Naive thymus-derived CD4-positive, alpha-beta T cell (primary cell): ENCODE measurements at regions of chr17 and their contacts with region 1.

Region 1: GRCh38 chr17:17752089-17752820 is 71.0 kb downstream of the RAI1 start:
- DNase-seq: peak; percentile 93 to 98 (median 97)
- ATAC-seq: peak; percentile 96
- H3K4me3 ChIP-seq: peak overlapping the region; percentile 62
- H3K4me3 Mint-ChIP-seq: peak overlapping the region; percentile 78 to 99 (median 92)
- H3K27ac ChIP-seq: peak overlapping the region; percentile 89
- H3K27ac Mint-ChIP-seq: peak overlapping the region; percentile 96 to 100 (median 98)
- H3K4me1 ChIP-seq: peaks cover 39 to 67% of the 10 kb centered on the region in 2 donors
- H3K4me1 Mint-ChIP-seq: peaks cover 50 to 93% (median 77%) of the 10 kb centered on the region in 7 donors
- H3K27me3 ChIP-seq: no peaks in the 10 kb centered on the region
- H3K27me3 Mint-ChIP-seq: no peaks in the 10 kb centered on the region

Region 2: GRCh38 chr17:17681187-17681848 is 70.9 kb before region 1 on chr17 and contains the start of gene RAI1:
- CTCF ChIA-PET with region 1: interaction called, 3 read pairs
- POLR2A ChIA-PET with region 1: interaction called, 4 read pairs
- intact Hi-C with region 1: loop called (anchors 1 to 2 kb)
- DNase-seq: peak; percentile 64 to 87 (median 79)
- ATAC-seq: peak; percentile 82
- H3K4me3 ChIP-seq: peak within 1 kb of the TSS; percentile 62
- H3K4me3 Mint-ChIP-seq: peak within 1 kb of the TSS; percentile 84 to 92 (median 89)
- H3K27ac ChIP-seq: peak within 1 kb of the TSS; percentile 93
- H3K27ac Mint-ChIP-seq: peak within 1 kb of the TSS in 7 of 9 donors; percentile 59 to 90 (median 77)
- H3K4me1 ChIP-seq: peaks cover 7 to 17% of the 10 kb centered on the region in 2 donors
- H3K4me1 Mint-ChIP-seq: peaks cover 14 to 42% (median 37%) of the 10 kb centered on the region in 7 donors
- H3K27me3 ChIP-seq: no peaks in the 10 kb centered on the region
- H3K27me3 Mint-ChIP-seq: peaks cover 0 to 16% (median 0%) of the 10 kb centered on the region in 5 donors
- total RNA-seq, gene RAI1: 20.1 to 46.2 (median 23.6) TPM

Region 3: GRCh38 chr17:17706140-17707060 is 45.9 kb before region 1 on chr17:
- CTCF ChIA-PET with region 1: no interaction called
- POLR2A ChIA-PET with region 1: no interaction called
- intact Hi-C with region 1: no loop called
- DNase-seq: no peak
- ATAC-seq: no peak
- H3K4me3 ChIP-seq: no peak overlapping the region
- H3K4me3 Mint-ChIP-seq: no peak overlapping the region
- H3K27ac ChIP-seq: no peak overlapping the region
- H3K27ac Mint-ChIP-seq: peak overlapping the region in 1 of 9 donors; percentile 33
- H3K4me1 ChIP-seq: no peaks in the 10 kb centered on the region
- H3K4me1 Mint-ChIP-seq: peaks cover 0 to 17% (median 4%) of the 10 kb centered on the region in 7 donors
- H3K27me3 ChIP-seq: no peaks in the 10 kb centered on the region
- H3K27me3 Mint-ChIP-seq: no peaks in the 10 kb centered on the region

Region 4: GRCh38 chr17:17739388-17740066 is 12.7 kb before region 1 on chr17:
- CTCF ChIA-PET with region 1: no interaction called
- POLR2A ChIA-PET with region 1: interaction called, 9 read pairs
- intact Hi-C with region 1: loop called in 1 of 2 experiments (anchors 1 kb)
- DNase-seq: no peak
- ATAC-seq: no peak
- H3K4me3 ChIP-seq: no peak overlapping the region
- H3K4me3 Mint-ChIP-seq: peak overlapping the region in 5 of 10 donors; percentile 2 to 55 (median 45)
- H3K27ac ChIP-seq: peak overlapping the region; percentile 43
- H3K27ac Mint-ChIP-seq: peak overlapping the region in 8 of 9 donors; percentile 26 to 86 (median 70)
- H3K4me1 ChIP-seq: peaks cover 0 to 12% of the 10 kb centered on the region in 2 donors
- H3K4me1 Mint-ChIP-seq: peaks cover 20 to 46% (median 36%) of the 10 kb centered on the region in 7 donors
- H3K27me3 ChIP-seq: no peaks in the 10 kb centered on the region
- H3K27me3 Mint-ChIP-seq: peaks cover 0 to 5% (median 0%) of the 10 kb centered on the region in 5 donors

Region 5: DNA sequence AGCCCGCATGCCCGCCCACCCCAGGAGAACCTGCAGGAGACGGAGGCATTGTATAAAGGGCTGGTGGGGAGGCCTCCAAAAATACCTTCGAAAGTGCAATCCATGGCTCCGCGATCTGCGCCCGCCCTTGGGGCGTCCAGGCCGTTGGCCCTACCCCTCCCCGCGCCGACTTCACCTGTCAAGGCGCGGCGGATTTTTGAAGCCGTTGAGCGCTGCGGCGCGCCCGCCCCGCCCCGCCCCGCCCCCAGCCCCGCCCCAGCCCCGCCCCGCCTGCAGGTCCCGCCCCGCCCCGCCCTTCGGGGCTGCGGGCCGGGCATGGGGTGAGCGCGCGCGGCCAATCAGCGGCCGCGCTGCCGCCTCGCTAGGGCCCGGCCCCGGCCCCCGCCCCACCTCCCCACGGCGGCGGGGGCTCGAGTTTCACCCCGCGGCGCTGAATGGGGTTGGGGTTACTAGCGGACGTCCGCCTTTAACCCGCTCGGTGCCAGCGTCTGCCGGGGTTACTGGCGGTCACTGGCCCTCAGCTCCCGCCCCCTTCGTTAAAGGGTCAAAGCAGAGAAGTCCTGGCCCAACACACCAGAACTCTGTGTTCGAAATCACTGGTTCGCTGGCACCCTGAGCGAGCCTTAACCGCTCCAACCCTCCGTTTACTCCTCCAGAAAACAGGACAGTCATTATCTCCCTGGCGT is 71.3 kb after region 1 on chr17:
- CTCF ChIA-PET with region 1: interaction called, 3 read pairs
- POLR2A ChIA-PET with region 1: no interaction called
- intact Hi-C with region 1: loop called (anchors 1 kb)
- DNase-seq: peak; percentile 71 to 84 (median 81)
- ATAC-seq: peak; percentile 93
- H3K4me3 ChIP-seq: peak overlapping the region; percentile 68
- H3K4me3 Mint-ChIP-seq: peak overlapping the region; percentile 78 to 86 (median 84)
- H3K27ac ChIP-seq: peak overlapping the region; percentile 74
- H3K27ac Mint-ChIP-seq: peak overlapping the region; percentile 78 to 96 (median 93)
- H3K4me1 ChIP-seq: peaks cover 41 to 81% of the 10 kb centered on the region in 2 donors
- H3K4me1 Mint-ChIP-seq: peaks cover 72 to 95% (median 87%) of the 10 kb centered on the region in 7 donors
- H3K27me3 ChIP-seq: no peaks in the 10 kb centered on the region
- H3K27me3 Mint-ChIP-seq: no peaks in the 10 kb centered on the region

Region 6: DNA sequence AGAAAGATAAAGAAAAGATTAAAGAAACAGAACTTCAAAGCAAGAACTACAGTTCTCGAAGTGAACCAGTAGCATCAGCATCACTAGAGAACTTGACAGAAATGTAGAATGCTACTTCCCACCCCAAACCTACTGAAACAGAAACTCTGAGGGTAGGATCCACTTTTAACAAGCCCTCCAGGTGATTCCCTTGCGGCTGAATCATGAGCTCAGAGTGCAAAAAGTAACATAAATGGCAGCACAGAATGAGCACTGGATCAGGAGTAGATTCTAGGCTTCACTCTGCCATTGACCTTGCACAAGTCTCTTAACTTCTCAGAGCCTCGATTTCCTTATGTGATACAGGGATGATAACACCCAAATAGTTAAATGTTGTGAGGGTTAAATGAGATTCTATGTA is 214.1 kb after region 1 on chr17:
- CTCF ChIA-PET with region 1: no interaction called
- POLR2A ChIA-PET with region 1: interaction called, 3 read pairs
- intact Hi-C with region 1: loop called in 1 of 2 experiments (anchors 2 kb)
- DNase-seq: no peak
- ATAC-seq: no peak
- H3K4me3 ChIP-seq: no peak overlapping the region
- H3K4me3 Mint-ChIP-seq: peak overlapping the region in 3 of 10 donors; percentile 2 to 38 (median 3)
- H3K27ac ChIP-seq: no peak overlapping the region
- H3K27ac Mint-ChIP-seq: peak overlapping the region in 6 of 9 donors; percentile 10 to 60 (median 28)
- H3K4me1 ChIP-seq: peaks cover 5 to 42% of the 10 kb centered on the region in 2 donors
- H3K4me1 Mint-ChIP-seq: peaks cover 48 to 88% (median 79%) of the 10 kb centered on the region in 7 donors
- H3K27me3 ChIP-seq: no peaks in the 10 kb centered on the region
- H3K27me3 Mint-ChIP-seq: no peaks in the 10 kb centered on the region

Region 7: DNA sequence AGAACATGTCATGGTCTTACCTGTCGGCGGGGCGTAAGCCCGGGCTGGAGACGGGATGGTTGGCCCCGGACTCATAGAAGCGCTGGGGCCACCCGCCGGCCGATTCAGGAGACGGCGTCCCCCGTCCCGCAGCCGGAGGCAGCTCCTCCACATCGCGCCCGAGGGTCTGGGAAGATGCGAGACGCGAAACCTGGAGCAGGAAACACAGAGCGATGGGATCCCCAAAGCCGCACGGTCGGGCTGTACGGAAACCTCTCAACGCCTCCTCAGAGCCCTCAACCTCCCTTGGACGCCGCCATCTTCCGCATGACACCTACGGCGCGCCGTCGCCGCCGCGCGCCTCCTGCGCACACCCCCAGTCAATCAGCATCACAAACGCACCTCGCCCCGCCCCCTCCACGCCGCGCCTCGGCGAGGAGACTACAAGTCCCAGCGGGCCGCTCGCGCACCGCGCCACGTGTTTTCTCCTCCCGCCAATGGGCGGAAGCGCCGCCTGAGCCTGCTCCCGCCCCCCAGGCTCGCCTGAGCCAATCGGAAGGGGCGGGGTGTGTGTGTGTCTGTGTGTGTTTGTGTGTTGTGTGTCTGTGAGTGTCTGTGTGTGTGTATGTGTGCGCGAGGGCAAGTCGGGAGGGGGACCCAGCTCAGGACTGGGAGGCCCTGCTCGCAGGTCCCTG is 286.7 kb after region 1 on chr17 and contains the starts of genes ATPAF2 and GID4:
- CTCF ChIA-PET with region 1: no interaction called
- POLR2A ChIA-PET with region 1: interaction called, 3 read pairs
- intact Hi-C with region 1: loop called (anchors 1 to 2 kb)
- DNase-seq: peak; percentile 99 to 100 (median 100)
- ATAC-seq: peak; percentile 96
- H3K4me3 ChIP-seq: peak within 1 kb of the TSS; percentile 79
- H3K4me3 Mint-ChIP-seq: peak within 1 kb of the TSS; percentile 88 to 100 (median 98)
- H3K27ac ChIP-seq: peak within 1 kb of the TSS; percentile 88
- H3K27ac Mint-ChIP-seq: peak within 1 kb of the TSS; percentile 87 to 99 (median 97)
- H3K4me1 ChIP-seq: peaks cover 23 to 30% of the 10 kb centered on the region in 2 donors
- H3K4me1 Mint-ChIP-seq: peaks cover 42 to 70% (median 53%) of the 10 kb centered on the region in 7 donors
- H3K27me3 ChIP-seq: no peaks in the 10 kb centered on the region
- H3K27me3 Mint-ChIP-seq: no peaks in the 10 kb centered on the region
- total RNA-seq, gene ATPAF2: 26.3 to 36.7 (median 32.5) TPM
- total RNA-seq, gene GID4: 6.0 to 11.4 (median 10.0) TPM

Region 8: DNA sequence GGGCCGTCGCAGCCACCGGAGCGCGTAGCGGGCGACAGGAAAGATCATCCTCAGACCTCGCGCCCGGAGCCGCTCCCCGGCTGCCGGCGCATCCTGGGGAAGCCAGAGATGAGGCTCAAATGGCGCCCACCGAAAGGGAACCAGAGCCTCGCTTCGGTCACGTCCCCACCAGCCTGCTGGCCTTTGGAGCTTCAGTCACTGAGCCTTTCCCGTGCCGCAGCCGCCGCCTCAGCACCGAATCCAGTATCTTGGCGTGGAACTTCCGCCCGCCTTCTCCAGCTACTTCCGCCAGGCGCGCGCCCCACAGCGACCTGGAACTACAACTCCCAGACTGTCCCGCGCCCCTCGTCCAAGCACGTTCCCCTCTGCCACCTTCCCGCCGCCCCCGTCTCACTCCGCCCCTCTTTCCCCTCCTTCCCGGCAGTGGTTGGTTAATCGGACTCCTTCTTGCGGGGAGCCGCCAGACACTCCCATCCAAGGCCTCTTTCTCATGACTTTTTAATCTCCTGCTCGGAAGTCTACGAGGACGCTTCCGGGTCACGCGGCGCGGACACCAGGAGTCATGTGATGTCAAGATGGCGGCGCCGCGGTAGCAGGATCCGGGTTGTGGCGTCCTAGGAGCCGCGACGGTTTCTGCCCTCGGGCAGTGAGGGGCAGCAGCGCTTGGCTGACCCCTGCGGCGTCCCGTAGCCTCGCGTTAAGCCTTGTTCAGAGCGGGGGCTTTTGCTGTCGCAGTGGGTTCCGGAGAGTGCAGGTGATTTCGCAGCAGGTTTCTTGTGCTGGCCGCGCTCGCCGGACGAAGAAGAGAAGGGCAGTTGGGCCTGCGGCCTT is 562.7 kb after region 1 on chr17 and contains the starts of genes SMCR8 and TOP3A:
- CTCF ChIA-PET with region 1: no interaction called
- POLR2A ChIA-PET with region 1: no interaction called
- intact Hi-C with region 1: loop called in 1 of 2 experiments (anchors 5 kb)
- DNase-seq: peak; percentile 86 to 99 (median 98)
- ATAC-seq: peak; percentile 96
- H3K4me3 ChIP-seq: peak within 1 kb of the TSS; percentile 95
- H3K4me3 Mint-ChIP-seq: peak within 1 kb of the TSS; percentile 89 to 98 (median 93)
- H3K27ac ChIP-seq: peak within 1 kb of the TSS; percentile 93
- H3K27ac Mint-ChIP-seq: peak within 1 kb of the TSS; percentile 92 to 99 (median 95)
- H3K4me1 ChIP-seq: peaks cover 50 to 54% of the 10 kb centered on the region in 2 donors
- H3K4me1 Mint-ChIP-seq: peaks cover 61 to 88% (median 83%) of the 10 kb centered on the region in 7 donors
- H3K27me3 ChIP-seq: no peaks in the 10 kb centered on the region
- H3K27me3 Mint-ChIP-seq: peaks cover 0 to 2% (median 0%) of the 10 kb centered on the region in 5 donors
- total RNA-seq, gene SMCR8: 29.0 to 61.7 (median 52.1) TPM
- total RNA-seq, gene TOP3A: 39.0 to 74.9 (median 43.6) TPM